ENCODE measurements at regions of chr1 and their contacts with region 1.

Region 1: DNA sequence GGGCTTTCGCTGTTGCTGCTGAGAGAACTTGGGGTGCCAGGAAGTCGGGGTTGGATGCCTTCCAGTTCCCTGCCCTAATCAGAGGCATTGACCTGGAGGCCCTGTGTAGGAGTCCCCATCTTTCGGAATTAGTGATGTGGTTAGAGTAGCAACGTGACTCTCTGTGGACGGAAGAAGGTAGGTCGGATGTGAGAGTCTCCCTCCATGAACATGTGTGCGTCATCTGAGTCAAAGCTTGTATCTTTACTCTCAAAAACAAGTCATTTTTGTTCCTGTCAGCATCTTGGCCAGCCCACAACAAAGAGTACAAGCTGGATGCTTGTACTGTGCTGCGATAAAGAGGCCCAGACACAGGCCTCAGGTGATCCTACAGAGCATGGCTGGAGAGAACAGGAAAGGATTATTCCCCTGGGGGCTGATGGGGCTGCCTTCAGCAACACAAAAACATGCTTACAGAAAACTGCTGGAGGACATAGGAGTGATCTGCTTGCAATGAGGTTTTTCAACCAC is 31.0 kb upstream of the IL10 start:
- DNase-seq: peak; percentile 63 to 94 (median 91)
- H3K4me3 ChIP-seq: no peak overlapping the region
- H3K4me3 Mint-ChIP-seq: peak overlapping the region; percentile 2 to 73 (median 27)
- H3K27ac ChIP-seq: peak overlapping the region; percentile 41
- H3K27ac Mint-ChIP-seq: peak overlapping the region; percentile 85 to 99 (median 96)
- H3K4me1 ChIP-seq: peaks cover 55% of the 10 kb centered on the region
- H3K4me1 Mint-ChIP-seq: peaks cover 56 to 74% (median 73%) of the 10 kb centered on the region in 3 donors
- H3K27me3 ChIP-seq: no peaks in the 10 kb centered on the region
- H3K27me3 Mint-ChIP-seq: peaks cover 0 to 2% of the 10 kb centered on the region in 2 donors

Region 2: GRCh38 chr1:206766251-206766856 is 36.9 kb before region 1 on chr1:
- CTCF ChIA-PET with region 1: interaction called, 12 read pairs
- POLR2A ChIA-PET with region 1: interaction called, 8 read pairs
- DNase-seq: peak; percentile 57 to 84 (median 73)
- H3K4me3 ChIP-seq: peak overlapping the region; percentile 7
- H3K4me3 Mint-ChIP-seq: peak overlapping the region; percentile 25 to 82 (median 63)
- H3K27ac ChIP-seq: no peak overlapping the region
- H3K27ac Mint-ChIP-seq: peak overlapping the region; percentile 21 to 98 (median 85)
- H3K4me1 ChIP-seq: peaks cover 61% of the 10 kb centered on the region
- H3K4me1 Mint-ChIP-seq: peaks cover 55 to 78% (median 75%) of the 10 kb centered on the region in 3 donors
- H3K27me3 ChIP-seq: no peaks in the 10 kb centered on the region
- H3K27me3 Mint-ChIP-seq: no peaks in the 10 kb centered on the region

Region 3: DNA sequence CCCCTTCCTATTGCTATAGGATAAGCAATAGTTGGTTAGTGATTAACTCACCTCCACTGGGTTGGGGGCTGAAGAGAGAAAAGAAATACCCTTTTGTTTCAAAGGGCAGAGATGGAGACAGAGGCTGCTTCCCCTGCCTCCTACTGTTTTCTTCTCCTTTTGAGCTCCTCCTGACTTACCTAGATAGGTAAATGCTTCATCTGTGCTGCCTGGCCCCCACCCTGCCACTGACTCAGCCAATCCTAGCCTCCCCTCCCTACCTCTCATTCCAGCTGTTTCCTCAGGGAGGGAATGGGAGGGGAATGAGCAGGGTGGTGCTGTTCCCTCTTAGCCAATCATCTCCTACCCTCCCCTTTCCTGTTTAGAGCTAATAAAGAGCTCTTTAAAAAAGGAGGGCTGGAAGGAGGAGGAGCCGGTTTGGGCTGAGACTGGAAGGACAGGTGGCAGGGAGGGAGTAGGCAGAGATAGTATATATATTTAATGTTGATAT is 229.3 kb after region 1 on chr1 and contains the start of gene C1orf116:
- CTCF ChIA-PET with region 1: no interaction called
- POLR2A ChIA-PET with region 1: no interaction called
- DNase-seq: no peak
- H3K4me3 ChIP-seq: no peak within 1 kb of the TSS
- H3K4me3 Mint-ChIP-seq: no peak within 1 kb of the TSS
- H3K27ac ChIP-seq: no peak within 1 kb of the TSS
- H3K27ac Mint-ChIP-seq: no peak within 1 kb of the TSS
- H3K4me1 ChIP-seq: no peaks in the 10 kb centered on the region
- H3K4me1 Mint-ChIP-seq: no peaks in the 10 kb centered on the region
- H3K27me3 ChIP-seq: no peaks in the 10 kb centered on the region
- H3K27me3 Mint-ChIP-seq: peaks cover 14 to 74% of the 10 kb centered on the region in 2 donors
- total RNA-seq, gene C1orf116: not detected

Measured in CD8-positive, alpha-beta memory T cell (primary cell).